ENCODE measurements at regions of chr10 and their contacts with region 1.

Region 1: GRCh38 chr10:62038609-62039190 is 137.2 kb downstream of the ARID5B start:
- DNase-seq: no peak
- H3K4me3 ChIP-seq: no peak overlapping the region
- H3K27ac ChIP-seq: no peak overlapping the region
- H3K27me3 ChIP-seq: no peaks in the 10 kb centered on the region
- CTCF ChIP-seq: peak; percentile 90

Region 2: GRCh38 chr10:61974601-61975390 is 63.9 kb before region 1 on chr10:
- CTCF ChIA-PET with region 1: no interaction called
- POLR2A ChIA-PET with region 1: no interaction called
- DNase-seq: peak; percentile 38
- H3K4me3 ChIP-seq: no peak overlapping the region; the same call in 1 of the 2 replicates
- H3K27ac ChIP-seq: no peak overlapping the region
- H3K27me3 ChIP-seq: no peaks in the 10 kb centered on the region
- CTCF ChIP-seq: no peak

Region 3: DNA sequence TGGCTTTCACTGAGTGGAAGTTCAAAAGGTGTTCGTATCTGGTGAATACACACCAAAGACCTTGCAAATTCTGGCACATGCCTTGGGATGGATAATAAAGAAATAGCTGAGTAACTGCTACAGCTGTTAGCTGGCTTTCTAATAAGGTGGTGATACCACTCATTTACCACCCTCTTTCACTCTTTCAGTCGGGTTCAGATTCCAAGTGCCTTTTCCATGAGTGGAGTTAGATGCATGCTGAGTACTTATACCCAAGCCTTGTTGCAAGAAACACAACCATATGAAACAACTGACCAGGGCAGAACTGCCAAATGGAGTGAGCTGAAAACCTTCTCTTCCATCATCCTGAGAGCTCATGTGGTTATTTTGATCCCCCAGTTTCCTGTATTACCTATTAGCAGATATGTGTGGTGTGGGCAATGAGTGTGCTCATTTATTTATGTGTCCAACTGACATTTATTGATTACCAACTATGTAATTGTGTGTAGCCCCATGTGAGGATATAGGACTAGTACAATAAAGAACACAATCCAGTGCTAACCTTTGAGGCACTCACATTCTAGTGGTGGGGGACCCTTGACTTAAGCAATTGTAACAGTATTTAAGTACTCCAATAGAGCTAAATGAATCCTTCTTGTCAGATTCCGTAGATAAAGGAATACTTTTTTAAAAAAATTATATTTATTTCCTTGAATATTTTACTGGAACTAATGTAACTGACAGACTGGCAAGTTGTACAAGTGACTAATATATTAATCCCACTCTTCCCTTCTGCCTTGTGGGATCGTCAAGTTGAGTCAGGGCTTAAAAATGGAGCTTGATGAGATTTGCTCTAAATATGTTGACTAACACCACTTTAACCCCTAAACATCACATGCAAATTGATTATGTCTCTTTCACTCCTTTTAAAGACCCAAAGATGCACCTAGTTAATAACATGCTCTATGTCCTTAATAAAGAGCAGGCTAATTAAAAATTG is 12.5 kb before region 1 on chr10:
- CTCF ChIA-PET with region 1: interaction called, 38 read pairs
- POLR2A ChIA-PET with region 1: interaction called, 3 read pairs
- DNase-seq: no peak
- H3K4me3 ChIP-seq: no peak overlapping the region
- H3K27ac ChIP-seq: no peak overlapping the region
- H3K27me3 ChIP-seq: no peaks in the 10 kb centered on the region
- CTCF ChIP-seq: no peak

Region 4: GRCh38 chr10:62050893-62051433 is 12.3 kb after region 1 on chr10:
- CTCF ChIA-PET with region 1: interaction called, 25 read pairs
- POLR2A ChIA-PET with region 1: interaction called, 42 read pairs
- DNase-seq: peak; percentile 66
- H3K4me3 ChIP-seq: peak overlapping the region; percentile 94
- H3K27ac ChIP-seq: peak overlapping the region; percentile 84
- H3K27me3 ChIP-seq: no peaks in the 10 kb centered on the region
- CTCF ChIP-seq: no peak

Region 5: GRCh38 chr10:63256009-63256773 is 1217.5 kb after region 1 on chr10:
- CTCF ChIA-PET with region 1: no interaction called
- POLR2A ChIA-PET with region 1: no interaction called
- DNase-seq: no peak
- H3K4me3 ChIP-seq: no peak overlapping the region
- H3K27ac ChIP-seq: no peak overlapping the region
- H3K27me3 ChIP-seq: no peaks in the 10 kb centered on the region
- CTCF ChIP-seq: no peak

Measured in AG04450 (cell line).